Activated CD4-positive, alpha-beta T cell treated with anti-CD3 and anti-CD28 coated beads for 36 hours (primary cell): ENCODE measurements at regions of chr1 and their contacts with region 1.

Region 1: DNA sequence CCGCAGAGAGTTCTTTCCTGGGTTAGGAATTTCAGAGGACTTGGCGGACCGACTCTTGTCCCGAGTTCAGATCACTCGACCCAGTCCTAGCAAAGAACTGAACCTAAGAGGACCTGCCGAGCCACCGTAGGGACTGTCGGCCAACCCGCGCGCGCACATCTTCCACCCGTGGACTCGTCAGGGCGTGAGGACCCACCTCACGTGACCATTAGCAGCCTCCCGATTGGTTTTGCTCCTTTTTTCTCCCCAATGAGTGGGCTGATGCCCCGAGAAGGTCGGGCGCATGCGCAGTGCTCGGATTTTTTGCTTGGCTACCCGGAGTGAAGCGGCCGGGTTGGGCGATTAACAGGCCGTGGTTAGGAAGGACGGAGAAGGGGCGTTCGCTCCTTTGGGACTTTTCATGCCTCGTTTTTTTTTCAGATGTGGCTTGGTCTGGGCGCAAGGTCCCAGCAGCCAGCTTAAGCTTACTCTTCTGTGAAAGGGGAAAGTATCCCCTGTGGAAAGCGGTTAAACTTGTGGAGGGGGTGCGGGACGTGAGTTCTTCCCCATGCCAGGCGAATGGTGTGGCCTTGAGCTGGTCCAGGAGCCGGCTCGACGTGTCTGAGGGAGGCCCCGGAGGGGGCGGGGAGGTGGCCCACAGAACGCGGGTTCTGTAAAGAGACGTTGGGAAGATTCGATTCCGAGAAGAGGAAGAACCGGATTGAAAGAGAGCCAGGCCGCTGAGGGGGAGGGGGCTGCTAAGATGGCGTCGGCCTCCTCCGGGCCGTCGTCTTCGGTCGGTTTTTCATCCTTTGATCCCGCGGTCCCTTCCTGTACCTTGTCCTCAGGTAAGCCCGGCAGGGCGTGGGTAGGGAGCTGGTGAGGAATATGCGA is at the start of gene PIP5K1A:
- DNase-seq: peak; percentile 100
- ATAC-seq: peak; percentile 90
- H3K4me3 Mint-ChIP-seq: peak within 1 kb of the TSS; percentile 98
- H3K27ac Mint-ChIP-seq: peak within 1 kb of the TSS; percentile 100
- H3K4me1 Mint-ChIP-seq: peaks cover 38% of the 10 kb centered on the region
- H3K27me3 Mint-ChIP-seq: no peaks in the 10 kb centered on the region
- total RNA-seq, gene PIP5K1A: 74.5 to 85.1 TPM

Region 2: GRCh38 chr1:150902356-150903140 is 295.9 kb before region 1 on chr1:
- CTCF ChIA-PET with region 1: no interaction called
- POLR2A ChIA-PET with region 1: no interaction called
- intact Hi-C with region 1: no loop called
- DNase-seq: no peak
- ATAC-seq: no peak
- H3K4me3 Mint-ChIP-seq: no peak overlapping the region
- H3K27ac Mint-ChIP-seq: no peak overlapping the region
- H3K4me1 Mint-ChIP-seq: peaks cover 7% of the 10 kb centered on the region
- H3K27me3 Mint-ChIP-seq: no peaks in the 10 kb centered on the region

Region 3: DNA sequence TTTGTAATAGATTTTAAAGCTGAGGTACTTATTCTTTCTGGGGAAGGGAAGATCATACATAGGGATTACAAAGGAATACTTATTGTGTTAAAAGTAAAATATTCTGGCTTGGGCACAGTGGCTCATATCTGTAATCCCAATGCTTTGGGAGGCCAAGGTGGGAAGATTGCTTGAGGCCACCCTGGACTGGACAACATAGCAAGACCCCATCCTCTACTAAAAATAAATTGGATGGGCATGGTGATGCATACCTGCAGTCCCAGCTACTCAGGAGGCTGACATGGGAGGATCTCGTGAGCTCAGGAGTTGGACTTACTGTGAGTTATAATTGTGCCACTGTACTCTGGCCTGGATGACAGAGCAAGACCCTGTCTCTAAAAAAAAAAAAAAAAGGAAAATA is 100.4 kb before region 1 on chr1:
- CTCF ChIA-PET with region 1: interaction called, 10 read pairs
- POLR2A ChIA-PET with region 1: no interaction called
- intact Hi-C with region 1: no loop called
- DNase-seq: no peak
- ATAC-seq: no peak
- H3K4me3 Mint-ChIP-seq: no peak overlapping the region
- H3K27ac Mint-ChIP-seq: no peak overlapping the region
- H3K4me1 Mint-ChIP-seq: no peaks in the 10 kb centered on the region
- H3K27me3 Mint-ChIP-seq: no peaks in the 10 kb centered on the region

Region 4: GRCh38 chr1:151165738-151166505 is 32.6 kb before region 1 on chr1 and contains the starts of genes LYSMD1 and SCNM1:
- CTCF ChIA-PET with region 1: interaction called, 3 read pairs
- POLR2A ChIA-PET with region 1: no interaction called
- intact Hi-C with region 1: loop called (anchors 1 to 2 kb)
- DNase-seq: peak; percentile 98
- ATAC-seq: peak; percentile 96
- H3K4me3 Mint-ChIP-seq: peak within 1 kb of the TSS; percentile 92
- H3K27ac Mint-ChIP-seq: peak within 1 kb of the TSS; percentile 98
- H3K4me1 Mint-ChIP-seq: peaks cover 48% of the 10 kb centered on the region
- H3K27me3 Mint-ChIP-seq: no peaks in the 10 kb centered on the region
- total RNA-seq, gene LYSMD1: 4.3 to 5.1 TPM
- total RNA-seq, gene SCNM1: 64.3 to 90.8 TPM

Region 5: DNA sequence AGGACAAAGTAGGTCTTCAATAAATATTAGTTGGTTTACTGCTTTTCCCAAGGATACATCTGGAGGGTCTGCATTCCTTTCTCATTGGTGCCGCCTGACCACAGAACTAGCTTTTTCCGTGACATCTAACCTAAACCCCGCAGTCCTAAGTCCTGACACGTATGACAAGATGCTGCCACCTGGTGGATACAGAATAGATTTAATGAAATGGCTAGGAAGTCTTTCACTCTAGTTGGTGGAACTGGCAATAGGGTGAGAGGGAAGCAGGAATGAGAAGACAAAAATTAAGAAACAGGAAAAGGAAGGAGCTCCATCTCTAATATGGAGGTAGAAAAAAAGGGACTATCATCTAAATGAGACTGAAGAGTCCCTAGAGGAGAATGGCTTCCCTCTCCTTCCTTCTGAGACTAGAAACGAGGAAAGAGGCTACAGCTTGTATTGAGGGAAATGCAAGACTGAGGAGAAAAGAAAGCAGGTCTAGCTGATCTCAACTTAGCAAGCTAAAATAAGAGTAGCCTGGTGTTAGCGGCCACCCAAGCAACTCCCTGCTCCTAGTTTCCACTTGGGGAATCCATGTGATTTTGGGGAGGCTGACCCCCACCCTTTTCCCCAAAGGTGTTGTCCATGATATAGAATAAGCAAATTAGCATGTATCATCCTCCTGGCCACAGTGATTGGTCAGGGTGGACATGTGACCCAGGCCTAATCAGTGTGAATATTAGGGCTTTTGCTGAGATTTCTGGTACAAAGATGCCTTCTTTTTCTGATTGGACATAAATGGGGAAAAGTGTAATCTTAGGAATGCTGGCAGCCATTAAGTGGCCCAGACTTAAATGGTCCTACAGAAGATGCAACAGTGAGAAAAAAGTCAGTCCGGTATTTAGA is 142.6 kb after region 1 on chr1:
- CTCF ChIA-PET with region 1: no interaction called
- POLR2A ChIA-PET with region 1: interaction called, 4 read pairs
- intact Hi-C with region 1: loop called (anchors 1 to 2 kb)
- DNase-seq: peak; percentile 65
- ATAC-seq: peak; percentile 91
- H3K4me3 Mint-ChIP-seq: no peak overlapping the region
- H3K27ac Mint-ChIP-seq: peak overlapping the region; percentile 39
- H3K4me1 Mint-ChIP-seq: peaks cover 24% of the 10 kb centered on the region
- H3K27me3 Mint-ChIP-seq: no peaks in the 10 kb centered on the region

Region 6: DNA sequence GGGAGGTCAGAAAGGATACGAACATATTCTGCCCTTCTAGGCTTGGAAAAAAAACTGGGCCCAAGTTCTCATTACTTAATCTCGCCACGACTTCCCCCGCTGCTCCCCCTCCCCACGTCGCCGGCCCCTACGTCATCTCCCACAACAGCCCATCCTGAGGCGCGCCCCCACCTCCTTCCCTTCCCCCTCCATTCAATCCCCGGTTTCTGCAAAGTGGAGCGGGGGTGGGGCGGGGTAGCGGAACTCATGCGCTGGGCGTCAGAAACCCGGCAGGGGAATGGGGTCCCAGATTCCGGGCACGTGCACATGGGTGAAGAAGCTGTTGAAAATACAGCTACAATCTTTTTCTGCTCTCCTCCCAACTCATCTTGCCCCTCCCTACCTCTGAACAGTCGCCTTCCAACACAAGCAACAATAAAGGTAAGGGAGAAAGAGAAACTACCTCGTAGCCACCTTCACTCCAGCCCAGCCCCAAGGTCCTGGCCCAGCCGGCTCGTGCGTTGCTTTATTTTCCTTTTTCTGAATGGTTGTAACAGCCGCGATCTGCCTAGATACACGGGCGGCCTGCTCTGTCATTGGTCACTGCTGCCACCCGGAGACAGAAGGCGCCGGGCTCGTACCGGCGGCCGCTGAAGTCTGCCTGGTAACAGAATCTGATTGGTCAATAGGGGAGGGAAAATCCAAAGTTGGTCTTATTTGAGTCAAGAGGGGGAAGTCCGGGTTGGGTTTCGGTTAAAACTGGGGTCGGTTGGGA is 148.5 kb after region 1 on chr1 and contains the start of gene RFX5:
- CTCF ChIA-PET with region 1: no interaction called
- POLR2A ChIA-PET with region 1: interaction called, 4 read pairs
- intact Hi-C with region 1: loop called (anchors 2 kb)
- DNase-seq: peak; percentile 96
- ATAC-seq: peak; percentile 98
- H3K4me3 Mint-ChIP-seq: peak within 1 kb of the TSS; percentile 96
- H3K27ac Mint-ChIP-seq: peak within 1 kb of the TSS; percentile 94
- H3K4me1 Mint-ChIP-seq: peaks cover 31% of the 10 kb centered on the region
- H3K27me3 Mint-ChIP-seq: no peaks in the 10 kb centered on the region
- total RNA-seq, gene RFX5: 47.6 to 50.4 TPM

Region 7: GRCh38 chr1:151399890-151400495 is 201.5 kb after region 1 on chr1:
- CTCF ChIA-PET with region 1: no interaction called
- POLR2A ChIA-PET with region 1: no interaction called
- intact Hi-C with region 1: loop called (anchors 1 to 5 kb)
- DNase-seq: peak; percentile 43
- ATAC-seq: peak; percentile 21
- H3K4me3 Mint-ChIP-seq: peak overlapping the region; percentile 88
- H3K27ac Mint-ChIP-seq: peak overlapping the region; percentile 99
- H3K4me1 Mint-ChIP-seq: peaks cover 29% of the 10 kb centered on the region
- H3K27me3 Mint-ChIP-seq: no peaks in the 10 kb centered on the region